ENCODE measurements at regions of chr16 and their contacts with region 1.

Region 1: GRCh38 chr16:813204-813915 is 12.8 kb upstream of the GNG13 start:
- DNase-seq: peak; percentile 55 to 91 (median 81)

Region 2: GRCh38 chr16:636206-637080 is 176.9 kb before region 1 on chr16 and contains the start of gene METTL26:
- intact Hi-C with region 1: no loop called
- DNase-seq: peak; percentile 93 to 100 (median 97)

Region 3: DNA sequence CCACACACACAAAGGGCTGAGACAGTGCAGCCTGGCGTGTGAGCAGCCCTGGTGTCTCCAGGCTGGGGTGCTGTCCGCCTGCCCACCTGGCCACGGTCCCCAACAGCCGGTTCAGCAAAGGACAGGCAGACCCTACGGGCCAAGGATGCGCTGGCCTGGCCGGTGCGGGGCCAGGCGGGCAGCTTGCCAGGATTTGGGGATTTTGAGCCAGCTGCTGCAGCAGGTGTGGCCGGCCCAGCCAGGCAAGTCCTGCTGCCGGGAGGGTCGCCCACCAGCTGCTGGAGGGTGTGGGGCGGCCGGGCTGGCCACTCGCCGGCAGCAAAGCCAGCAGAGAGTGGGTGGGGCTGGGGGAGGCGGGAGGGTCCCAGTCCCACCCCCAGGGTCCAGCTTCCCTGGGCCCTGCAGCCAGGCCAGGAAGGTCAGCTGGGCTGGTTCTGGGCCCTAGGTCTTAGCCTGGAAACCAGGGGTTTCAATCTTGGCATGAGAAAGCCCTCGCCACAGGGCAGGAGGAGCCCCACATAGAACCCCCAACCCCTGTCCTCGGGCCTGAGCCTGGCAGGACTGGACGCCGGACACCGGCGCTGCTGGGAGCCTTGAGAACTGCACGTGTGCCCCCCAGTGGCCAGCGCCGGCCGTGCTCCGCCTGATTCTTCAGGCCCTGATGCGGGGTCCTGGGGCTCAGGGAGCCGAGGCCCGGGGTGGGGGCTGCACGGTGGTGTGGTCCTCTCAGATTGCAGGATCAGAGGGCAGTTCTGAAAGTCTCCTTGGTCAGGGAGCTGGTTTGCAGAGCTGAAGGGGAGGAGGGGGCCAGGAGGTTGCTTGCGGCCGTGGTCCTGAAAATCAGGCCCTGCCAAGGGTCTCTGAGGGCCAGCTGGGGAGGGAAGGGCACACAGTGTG is 241.5 kb after region 1 on chr16:
- intact Hi-C with region 1: loop called (anchors 1 kb)
- DNase-seq: peak; percentile 63 to 93 (median 84)

Measured in head of caudate nucleus (tissue), 42 donors.